Left ventricle myocardium superior (tissue), 1 donor: ENCODE measurements at regions of chr6 and their contacts with region 1.

Region 1: GRCh38 chr6:111210194-111210728 is 123.0 kb downstream of the SLC16A10 start:
- DNase-seq: no peak
- ATAC-seq: peak; percentile 42

Region 2: DNA sequence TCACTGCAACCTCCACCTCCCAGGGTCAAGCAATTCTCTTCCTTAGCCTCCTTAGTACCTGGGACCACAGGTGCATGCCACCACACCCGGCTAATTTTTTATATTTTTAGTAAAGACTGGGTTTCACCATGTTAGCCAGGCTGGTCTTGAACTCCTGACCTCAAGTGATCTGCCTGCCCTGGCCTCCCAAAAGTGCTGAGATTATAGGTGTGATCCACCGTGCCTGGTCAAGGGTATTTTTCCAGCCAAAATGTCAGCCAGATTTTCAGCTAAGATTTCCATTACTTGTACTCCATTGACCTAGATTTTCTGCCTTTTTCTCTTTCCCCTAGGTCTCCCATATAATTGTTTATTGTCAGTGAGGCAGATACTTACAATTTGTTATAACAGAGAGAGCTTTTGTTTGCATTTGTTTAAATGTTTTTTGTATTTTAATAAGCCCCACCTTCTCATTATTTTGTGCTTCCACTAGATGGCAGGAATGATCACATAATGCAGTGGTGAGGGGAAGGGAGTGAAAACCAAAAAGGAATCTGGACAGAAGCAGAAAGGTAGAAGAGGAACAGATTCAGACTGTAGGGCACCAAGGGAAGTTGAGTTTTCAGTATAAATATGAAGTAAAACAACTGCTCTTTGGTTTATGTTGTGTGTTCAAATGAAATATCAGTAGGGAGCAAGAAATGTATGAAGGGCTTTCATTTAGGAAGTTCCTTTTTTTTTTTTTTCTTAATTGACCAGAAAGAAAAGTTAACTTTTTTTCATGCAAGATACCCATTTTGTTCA is 198.7 kb before region 1 on chr6:
- intact Hi-C with region 1: loop called (anchors 2 kb)
- DNase-seq: no peak
- ATAC-seq: peak; percentile 73